HepG2 (cell line): ENCODE measurements at regions of chr16 and their contacts with region 1.

Region 1: GRCh38 chr16:59179446-59180082 is 445.4 kb upstream of the GOT2 start:
- DNase-seq: peak; percentile 16
- ATAC-seq: peak; percentile 53
- H3K4me3 ChIP-seq: no peak overlapping the region
- H3K27ac ChIP-seq: no peak overlapping the region
- H3K4me1 ChIP-seq: peaks cover 9% of the 10 kb centered on the region
- H3K27me3 ChIP-seq: no peaks in the 10 kb centered on the region; a peak in 1 of 5 replicates
- CTCF ChIP-seq: no peak
- EP300 ChIP-seq: no peak
- POLR2A ChIP-seq: no peak
- RAD21 ChIP-seq: no peak

Region 2: GRCh38 chr16:59210955-59211541 is 31.5 kb after region 1 on chr16:
- CTCF ChIA-PET with region 1: no interaction called
- POLR2A ChIA-PET with region 1: no interaction called
- in situ Hi-C with region 1: no loop called
- intact Hi-C with region 1: loop called (anchors 1 kb)
- DNase-seq: peak; percentile 92
- ATAC-seq: peak; percentile 99
- H3K4me3 ChIP-seq: no peak overlapping the region
- H3K27ac ChIP-seq: no peak overlapping the region
- H3K4me1 ChIP-seq: peaks cover 12% of the 10 kb centered on the region
- H3K27me3 ChIP-seq: no peaks in the 10 kb centered on the region
- CTCF ChIP-seq: no peak
- EP300 ChIP-seq: 0 out of 4 replicates have a peak, but pooled peaks of 1 of the 2 experiments have one; percentile 23
- POLR2A ChIP-seq: no peak
- RAD21 ChIP-seq: no peak